ENCODE measurements at regions of chr5 and their contacts with region 1.

Region 1: DNA sequence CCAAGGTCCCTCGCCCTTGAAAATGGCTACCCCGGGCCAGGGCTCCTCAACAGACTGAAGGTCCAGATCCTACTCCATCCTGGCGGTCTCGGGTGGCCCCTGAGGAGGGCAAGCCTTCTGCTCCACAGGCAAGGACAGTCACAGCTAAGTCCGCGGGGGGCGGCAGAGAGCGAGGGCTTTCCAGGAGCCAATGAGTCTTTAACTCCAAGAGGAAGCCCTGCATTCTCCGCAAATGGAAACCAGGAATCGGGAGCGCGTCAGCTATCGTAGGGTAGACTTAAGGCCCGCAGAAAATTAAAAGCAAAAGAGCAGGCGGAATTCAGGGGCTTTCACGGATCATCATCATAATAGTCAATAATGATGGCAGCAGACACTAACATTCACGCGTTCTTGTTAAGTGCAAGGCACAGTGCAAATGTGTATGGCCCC is 87.8 kb upstream of the TNFAIP8 start:
- DNase-seq: peak; percentile 67 to 93 (median 91)
- H3K4me3 ChIP-seq: peak overlapping the region; percentile 62 to 96 (median 81)
- H3K27ac ChIP-seq: peak overlapping the region in 58 of 59 donors; percentile 9 to 91 (median 82)
- H3K27me3 ChIP-seq: no peaks in the 10 kb centered on the region
- CTCF ChIP-seq: peak in 41 of 56 donors; percentile 1 to 78 (median 54)

Region 2: DNA sequence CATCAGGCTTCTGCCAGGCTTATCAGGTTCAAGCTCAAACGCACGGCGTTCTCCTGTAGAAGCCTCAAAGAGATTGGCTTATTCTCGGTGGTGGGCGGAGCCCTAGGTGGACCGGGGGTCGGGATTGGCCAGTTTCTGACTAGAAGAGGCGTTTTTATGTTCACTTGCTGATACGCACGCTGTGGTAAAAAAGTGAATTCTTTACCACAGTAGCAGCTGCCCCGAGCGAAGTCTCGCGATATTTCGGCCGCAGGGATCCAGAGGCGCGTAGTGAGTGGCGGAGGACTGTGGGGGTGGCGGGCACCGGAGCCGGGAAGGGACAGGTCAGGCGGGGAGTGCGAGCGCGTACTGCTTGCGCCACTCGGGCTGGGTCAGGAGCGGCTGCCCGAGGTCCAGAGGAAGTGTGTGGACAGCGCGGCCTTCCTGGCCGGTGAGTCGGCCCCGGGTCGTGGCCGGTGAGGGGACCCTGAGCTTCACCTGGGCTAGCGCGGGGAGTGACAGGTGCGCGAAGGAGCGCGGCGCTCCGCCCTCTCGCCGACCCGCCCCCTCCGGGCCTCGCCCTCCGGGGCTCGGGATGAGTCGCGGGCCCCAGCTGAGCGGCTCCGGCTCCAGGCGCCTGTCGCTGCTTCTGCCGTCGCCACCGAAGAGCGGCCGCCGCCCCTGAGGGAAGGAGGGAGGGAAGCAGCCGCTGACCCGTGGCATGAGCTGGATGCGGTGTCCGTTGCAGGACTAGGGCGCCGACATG is 197.0 kb before region 1 on chr5 and contains the start of gene DMXL1:
- intact Hi-C with region 1: loop called (anchors 2 to 5 kb)
- DNase-seq: peak; percentile 97 to 100 (median 99)
- H3K4me3 ChIP-seq: peak within 1 kb of the TSS; percentile 58 to 99 (median 94)
- H3K27ac ChIP-seq: peak within 1 kb of the TSS; percentile 68 to 99 (median 97)
- H3K27me3 ChIP-seq: no peaks in the 10 kb centered on the region
- CTCF ChIP-seq: peak in 21 of 56 donors; percentile 2 to 43 (median 11)
- total RNA-seq, gene DMXL1: 59.0 to 112 (median 84.6) TPM

Region 3: GRCh38 chr5:119411935-119412602 is 144.1 kb after region 1 on chr5:
- intact Hi-C with region 1: loop called (anchors 5 to 10 kb)
- DNase-seq: peak in 7 of 10 donors; percentile 25 to 73 (median 45)
- H3K4me3 ChIP-seq: peak overlapping the region; percentile 27 to 75 (median 59)
- H3K27ac ChIP-seq: peak overlapping the region in 46 of 59 donors; percentile 8 to 85 (median 59)
- H3K27me3 ChIP-seq: peaks cover 0 to 8% (median 0%) of the 10 kb centered on the region in 45 donors
- CTCF ChIP-seq: peak in 55 of 56 donors; percentile 86 to 99 (median 96)

Region 4: DNA sequence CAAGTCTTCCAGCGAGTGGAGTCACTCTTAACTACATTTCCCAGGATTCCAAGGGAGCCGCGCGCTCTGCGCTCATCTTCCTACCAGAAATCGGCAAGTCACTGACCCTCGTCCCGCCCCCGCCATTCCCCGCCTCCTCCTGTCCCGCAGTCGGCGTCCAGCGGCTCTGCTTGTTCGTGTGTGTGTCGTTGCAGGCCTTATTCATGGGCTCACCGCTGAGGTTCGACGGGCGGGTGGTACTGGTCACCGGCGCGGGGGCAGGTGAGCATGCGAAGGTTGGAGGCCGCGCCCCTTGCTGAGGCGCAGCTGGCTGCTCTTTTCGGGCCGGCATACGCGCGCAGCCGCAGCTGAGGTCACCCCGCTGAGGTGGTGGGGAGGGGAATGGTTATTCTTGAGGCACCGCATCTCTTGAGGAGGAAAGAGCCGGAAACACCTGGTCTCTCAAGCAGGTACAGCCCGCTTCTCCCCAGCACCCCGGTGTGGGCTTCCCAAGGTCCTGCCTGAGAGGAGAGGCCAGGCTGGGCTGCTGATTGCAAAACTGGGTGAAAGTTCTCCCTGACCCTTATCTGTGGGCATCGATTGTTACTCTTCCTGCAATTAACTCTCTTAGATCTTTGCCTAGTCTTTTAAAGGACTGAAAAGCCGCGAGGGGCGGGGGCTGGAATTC is 184.5 kb after region 1 on chr5 and contains the start of gene HSD17B4:
- intact Hi-C with region 1: loop called in 1 of 2 experiments (anchors 5 kb)
- DNase-seq: peak; percentile 91 to 97 (median 94)
- H3K4me3 ChIP-seq: peak within 1 kb of the TSS; percentile 59 to 99 (median 88)
- H3K27ac ChIP-seq: peak within 1 kb of the TSS; percentile 53 to 96 (median 86)
- H3K27me3 ChIP-seq: no peaks in the 10 kb centered on the region
- CTCF ChIP-seq: peak in 26 of 56 donors; percentile 5 to 55 (median 22)
- total RNA-seq, gene HSD17B4: 152 to 375 (median 249) TPM

Region 5: GRCh38 chr5:119681734-119682133 is 413.8 kb after region 1 on chr5:
- intact Hi-C with region 1: no loop called
- DNase-seq: no peak
- H3K4me3 ChIP-seq: no peak overlapping the region
- H3K27ac ChIP-seq: no peak overlapping the region
- H3K27me3 ChIP-seq: no peaks in the 10 kb centered on the region
- CTCF ChIP-seq: no peak

Region 6: DNA sequence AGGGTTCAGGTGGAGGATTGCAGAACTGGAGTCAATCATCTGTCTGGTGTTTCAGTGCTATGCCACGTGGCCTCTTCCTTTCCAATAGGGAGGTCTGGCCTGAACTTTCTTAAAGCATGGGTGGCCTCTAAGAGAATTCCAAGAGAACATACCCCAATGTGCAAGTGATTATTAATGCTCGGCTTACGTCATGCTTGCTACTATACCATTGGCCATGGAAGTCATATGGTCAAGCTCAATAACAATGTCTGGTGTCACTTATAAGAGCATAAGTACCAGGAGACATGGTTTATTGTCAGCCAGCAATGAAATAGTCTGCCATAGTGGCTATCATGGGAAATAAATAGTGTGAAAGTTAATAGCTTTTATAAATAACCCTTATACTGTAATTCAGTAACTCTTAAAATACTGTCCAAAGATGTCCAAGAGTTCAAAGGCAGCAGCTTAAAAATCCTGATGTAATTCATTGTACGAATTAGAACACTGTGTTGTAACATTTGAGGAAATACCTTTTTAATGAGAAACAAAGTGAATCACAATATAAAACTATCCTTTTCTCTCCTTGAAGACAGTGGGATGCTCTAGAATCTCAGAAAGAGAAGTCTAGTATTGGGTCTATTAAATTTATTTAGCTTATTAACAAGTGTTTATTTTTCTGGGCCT is 840.7 kb after region 1 on chr5:
- intact Hi-C with region 1: no loop called
- DNase-seq: no peak
- H3K4me3 ChIP-seq: no peak overlapping the region
- H3K27ac ChIP-seq: no peak overlapping the region
- H3K27me3 ChIP-seq: no peaks in the 10 kb centered on the region
- CTCF ChIP-seq: no peak

Measured in dorsolateral prefrontal cortex (tissue), 120 donors.